H1 (cell line): ENCODE measurements at regions of chr6 and their contacts with region 1.

Region 1: GRCh38 chr6:34027445-34027936 is 118.4 kb downstream of the GRM4 start:
- DNase-seq: peak; percentile 29 to 97
- H3K4me3 ChIP-seq: no peak overlapping the region
- H3K27ac ChIP-seq: no peak overlapping the region
- H3K4me1 ChIP-seq: peaks cover 0 to 2% (median 0%) of the 10 kb centered on the region in 4 experiments; a peak in 1 of 7 replicates
- H3K27me3 ChIP-seq: no peaks in the 10 kb centered on the region
- CTCF ChIP-seq: peak in 2 of 3 experiments; percentile 86 to 98; a peak in 3 of 4 replicates
- EP300 ChIP-seq: no peak
- POLR2A ChIP-seq: no peak
- RAD21 ChIP-seq: peak; percentile 89 to 93

Region 2: GRCh38 chr6:33781114-33781975 is 246.1 kb before region 1 on chr6:
- CTCF ChIA-PET with region 1: interaction called, 17 read pairs
- POLR2A ChIA-PET with region 1: no interaction called
- DNase-seq: peak; percentile 72 to 87
- H3K4me3 ChIP-seq: 0 out of 8 replicates have a peak overlapping the region, but pooled peaks of 1 of the 4 experiments have one; percentile 6
- H3K27ac ChIP-seq: peak overlapping the region; percentile 75
- H3K4me1 ChIP-seq: peaks cover 24 to 55% (median 40%) of the 10 kb centered on the region in 4 experiments
- H3K27me3 ChIP-seq: no peaks in the 10 kb centered on the region
- CTCF ChIP-seq: no peak
- EP300 ChIP-seq: peak in 1 of 2 experiments; percentile 78; a peak in 1 of 3 replicates
- POLR2A ChIP-seq: peak in 1 of 2 experiments; percentile 60; a peak in 1 of 3 replicates
- RAD21 ChIP-seq: no peak

Region 3: DNA sequence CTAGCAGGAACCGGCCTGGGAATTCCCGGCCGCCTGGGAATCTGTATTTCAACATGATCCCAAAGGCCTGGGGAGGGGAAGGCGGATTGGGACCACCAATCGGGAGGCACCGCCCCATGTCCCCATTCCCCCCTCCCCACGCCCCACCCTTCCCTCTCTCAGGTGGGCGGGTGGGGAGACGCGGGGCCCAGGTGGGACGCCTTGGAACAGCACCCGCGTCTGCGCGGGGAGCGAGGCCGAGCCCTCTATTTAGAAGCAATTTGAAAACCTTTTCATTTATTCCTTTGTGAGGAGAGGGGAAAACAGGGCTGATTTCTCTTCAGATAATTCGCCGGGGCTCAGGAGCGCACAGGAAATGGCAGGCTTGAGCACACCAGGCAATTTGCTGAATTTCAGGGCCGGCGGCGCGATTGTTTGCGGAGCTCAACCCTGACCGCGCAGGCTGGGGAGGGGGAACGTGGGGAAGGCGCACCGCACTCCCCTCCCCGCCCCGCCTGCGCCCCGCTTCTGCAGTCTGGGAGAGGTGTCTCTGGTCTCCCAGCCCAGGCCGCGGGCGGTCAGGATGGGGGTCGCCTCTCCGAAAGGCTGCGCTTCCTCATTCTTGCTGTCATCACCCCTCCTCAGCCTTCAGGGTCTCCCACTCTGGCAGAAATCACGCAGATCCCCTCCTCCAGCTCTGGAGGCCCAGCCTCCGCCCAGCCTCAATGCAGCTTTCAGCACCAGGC is 51.7 kb before region 1 on chr6:
- CTCF ChIA-PET with region 1: interaction called, 15 read pairs
- POLR2A ChIA-PET with region 1: interaction called, 3 read pairs
- DNase-seq: peak in 1 of 2 experiments; percentile 70
- H3K4me3 ChIP-seq: peak overlapping the region; percentile 35 to 63 (median 52)
- H3K27ac ChIP-seq: no peak overlapping the region
- H3K4me1 ChIP-seq: peaks cover 2 to 12% (median 3%) of the 10 kb centered on the region in 4 experiments; a peak in 5 of 7 replicates
- H3K27me3 ChIP-seq: peaks cover 5 to 14% (median 11%) of the 10 kb centered on the region in 4 experiments
- CTCF ChIP-seq: no peak
- EP300 ChIP-seq: no peak
- POLR2A ChIP-seq: no peak
- RAD21 ChIP-seq: no peak

Region 4: GRCh38 chr6:33994472-33995308 is 32.8 kb before region 1 on chr6:
- CTCF ChIA-PET with region 1: interaction called, 47 read pairs
- POLR2A ChIA-PET with region 1: no interaction called
- DNase-seq: no peak
- H3K4me3 ChIP-seq: no peak overlapping the region
- H3K27ac ChIP-seq: no peak overlapping the region
- H3K4me1 ChIP-seq: peaks cover 0 to 5% (median 1%) of the 10 kb centered on the region in 4 experiments; a peak in 4 of 7 replicates
- H3K27me3 ChIP-seq: peaks cover 0 to 6% (median under 1%) of the 10 kb centered on the region in 4 experiments; a peak in 4 of 7 replicates
- CTCF ChIP-seq: no peak
- EP300 ChIP-seq: no peak
- POLR2A ChIP-seq: no peak
- RAD21 ChIP-seq: no peak

Region 5: DNA sequence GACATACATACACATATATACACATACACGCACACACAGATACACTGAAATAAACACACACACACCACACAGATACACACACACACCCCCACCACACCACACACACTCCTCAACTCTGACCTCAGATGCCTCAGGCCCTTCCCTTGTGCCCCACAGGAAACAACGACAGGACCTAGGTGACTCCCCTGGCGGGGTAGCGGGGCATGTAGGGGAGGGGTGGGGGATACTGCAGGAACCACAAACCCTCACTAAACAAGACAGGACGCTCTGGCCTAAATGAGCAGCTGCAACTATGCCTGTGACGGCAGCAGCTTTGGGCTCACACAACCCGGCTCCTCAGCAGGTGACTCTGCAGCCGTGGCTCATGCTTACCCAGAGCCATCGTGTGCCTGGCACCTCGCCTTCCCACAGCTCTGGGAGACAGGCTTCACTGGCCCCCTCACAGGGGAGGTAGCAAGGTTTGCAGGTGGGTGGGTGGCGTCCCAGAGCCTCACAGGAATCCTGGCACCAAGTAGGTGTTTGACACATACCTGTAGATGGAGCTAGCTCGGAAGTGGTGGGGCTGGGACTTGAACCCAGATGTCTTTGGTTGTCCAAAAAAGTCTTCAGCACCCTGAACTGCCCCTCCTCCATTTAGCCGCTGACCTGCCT is 17.6 kb after region 1 on chr6:
- CTCF ChIA-PET with region 1: interaction called, 26 read pairs
- POLR2A ChIA-PET with region 1: interaction called, 4 read pairs
- DNase-seq: no peak
- H3K4me3 ChIP-seq: no peak overlapping the region
- H3K27ac ChIP-seq: no peak overlapping the region
- H3K4me1 ChIP-seq: peaks cover 0 to 13% (median 8%) of the 10 kb centered on the region in 4 experiments; a peak in 6 of 7 replicates
- H3K27me3 ChIP-seq: no peaks in the 10 kb centered on the region
- CTCF ChIP-seq: no peak
- EP300 ChIP-seq: no peak
- POLR2A ChIP-seq: no peak
- RAD21 ChIP-seq: no peak